ENCODE measurements at regions of chr3 and their contacts with region 1.

Region 1: DNA sequence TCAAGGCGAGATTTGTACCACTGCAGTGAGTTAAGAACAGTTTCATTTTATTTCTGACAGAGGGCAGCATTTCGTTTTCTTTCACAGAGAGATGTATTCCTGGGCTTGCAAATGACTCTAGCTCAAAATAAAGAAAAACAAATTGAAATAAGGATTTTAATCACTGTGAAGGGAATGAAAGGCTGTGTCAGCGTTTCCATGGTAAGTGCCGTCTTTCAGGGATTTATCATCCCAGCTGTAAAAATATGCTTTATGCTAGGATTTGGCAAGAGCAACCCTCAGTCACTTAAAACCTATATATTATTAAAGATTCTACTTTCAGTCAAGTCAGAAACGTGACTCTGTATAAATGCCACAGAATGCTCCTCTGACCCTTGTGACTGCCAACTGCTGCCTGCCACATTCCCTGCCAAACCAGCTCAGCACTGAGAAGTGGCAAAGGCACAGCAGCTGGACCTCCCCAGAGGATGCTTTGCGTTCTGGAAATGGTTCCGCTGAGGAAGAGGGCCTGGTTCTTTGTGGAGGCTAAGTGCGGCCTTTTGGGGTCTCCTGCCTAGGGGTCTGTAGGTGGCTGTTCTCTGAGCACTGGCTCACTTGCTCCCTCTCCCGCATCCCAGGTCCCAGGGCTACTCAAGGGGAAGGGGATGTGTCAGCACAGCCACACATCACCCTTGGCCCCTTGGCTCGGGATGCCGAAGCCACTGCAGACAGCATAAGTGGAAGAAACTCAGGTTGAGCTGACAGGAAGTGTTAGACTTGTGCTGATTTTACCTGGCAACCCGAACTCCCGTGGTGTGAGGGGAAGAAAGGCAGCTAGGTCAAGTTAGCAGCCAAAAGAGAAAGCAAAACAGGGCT is 56.6 kb upstream of the POMGNT2 start:
- DNase-seq: no peak
- H3K4me3 ChIP-seq: peak overlapping the region; percentile 34
- H3K27ac ChIP-seq: peak overlapping the region; percentile 51
- H3K4me1 ChIP-seq: peaks cover 12% of the 10 kb centered on the region
- H3K27me3 ChIP-seq: no peaks in the 10 kb centered on the region
- CTCF ChIP-seq: peak; percentile 69

Region 2: GRCh38 chr3:43338295-43338694 is 175.8 kb after region 1 on chr3:
- intact Hi-C with region 1: no loop called
- DNase-seq: no peak
- H3K4me3 ChIP-seq: no peak overlapping the region
- H3K27ac ChIP-seq: no peak overlapping the region
- H3K4me1 ChIP-seq: peaks cover 28% of the 10 kb centered on the region
- H3K27me3 ChIP-seq: no peaks in the 10 kb centered on the region
- CTCF ChIP-seq: no peak

Region 3: DNA sequence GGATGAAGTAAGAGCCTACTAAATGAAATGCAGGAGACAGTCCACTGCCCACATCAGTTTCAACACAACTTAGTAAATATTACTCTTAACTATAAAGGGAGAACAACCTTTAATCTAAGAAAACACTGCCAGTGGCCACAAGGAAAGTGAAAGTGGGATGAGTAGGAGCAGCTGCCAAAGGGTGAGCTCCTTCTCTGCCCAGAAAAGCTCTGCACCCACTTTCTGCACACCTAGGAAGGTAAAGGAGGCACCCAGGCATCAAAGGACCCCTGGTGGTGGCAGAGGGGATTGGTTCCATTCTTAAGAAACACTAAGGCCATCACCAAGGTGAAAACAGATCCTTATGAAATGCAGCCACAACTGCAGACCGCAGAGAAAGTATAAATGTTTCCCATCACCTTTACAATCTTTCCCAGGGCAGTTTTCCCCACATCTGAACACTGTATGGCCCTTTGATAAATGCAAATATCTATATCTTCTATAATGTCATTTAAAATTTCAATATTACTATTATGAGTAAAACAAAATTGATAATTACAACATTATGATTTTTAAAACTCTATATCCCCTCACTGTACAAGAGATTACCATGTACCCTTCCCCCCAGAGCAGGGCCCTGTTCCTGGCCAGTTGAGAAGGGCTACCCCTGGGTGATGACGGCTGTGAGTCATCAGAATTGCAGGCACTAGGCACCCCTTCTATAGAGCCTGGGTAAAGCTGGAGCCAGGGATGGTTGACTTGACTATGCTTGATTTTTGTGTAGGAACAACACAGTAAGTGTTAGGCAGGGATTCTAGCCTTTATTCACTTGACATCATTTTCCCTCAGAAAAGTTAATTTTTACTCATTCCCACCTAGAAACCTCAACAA is 215.8 kb after region 1 on chr3:
- intact Hi-C with region 1: loop called (anchors 10 kb)
- DNase-seq: no peak
- H3K4me3 ChIP-seq: no peak overlapping the region
- H3K27ac ChIP-seq: peak overlapping the region; percentile 27
- H3K4me1 ChIP-seq: peaks cover 13% of the 10 kb centered on the region
- H3K27me3 ChIP-seq: no peaks in the 10 kb centered on the region
- CTCF ChIP-seq: peak; percentile 70

Region 4: DNA sequence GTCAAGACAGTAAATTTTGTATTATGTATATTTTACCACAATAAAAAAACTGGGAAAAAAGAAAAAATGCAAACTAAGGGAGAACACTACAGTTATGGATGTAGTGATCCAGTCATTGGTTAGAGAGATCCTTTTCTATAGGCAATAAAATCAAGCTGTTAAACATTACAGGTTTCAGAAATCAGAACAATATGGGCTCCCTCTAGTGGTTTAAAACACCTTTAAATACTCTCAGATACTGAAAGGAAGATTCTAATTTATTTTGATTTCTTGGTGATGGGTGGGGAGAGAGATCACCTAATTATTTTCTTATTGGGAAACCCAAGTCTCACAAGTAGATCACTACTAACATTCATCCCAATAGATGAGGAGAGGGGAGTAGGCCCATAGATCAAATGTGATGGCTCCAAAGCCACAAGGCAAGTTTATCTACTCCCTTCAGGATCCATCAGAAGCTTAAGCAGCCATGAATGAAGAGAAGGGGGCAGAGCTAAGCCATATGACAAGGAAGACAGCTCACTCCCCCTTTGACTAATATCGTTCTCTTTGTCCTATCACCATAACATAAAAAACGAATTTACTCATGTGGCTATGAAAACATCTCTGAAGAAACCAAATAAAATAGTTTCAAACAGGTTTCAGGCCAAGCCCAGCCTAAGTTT is 340.7 kb after region 1 on chr3:
- intact Hi-C with region 1: loop called (anchors 5 kb)
- DNase-seq: no peak
- H3K4me3 ChIP-seq: no peak overlapping the region
- H3K27ac ChIP-seq: no peak overlapping the region
- H3K4me1 ChIP-seq: peaks cover 19% of the 10 kb centered on the region
- H3K27me3 ChIP-seq: no peaks in the 10 kb centered on the region
- CTCF ChIP-seq: peak; percentile 69